ENCODE measurements at regions of chr5 and their contacts with region 1.

Region 1: GRCh38 chr5:134245101-134245604 is 19.3 kb upstream of the PPP2CA start:
- DNase-seq: peak; percentile 72 to 91
- H3K4me3 ChIP-seq: peak overlapping the region; percentile 15; the same call in 1 of the 2 replicates
- H3K27ac ChIP-seq: peak overlapping the region; percentile 94
- H3K4me1 ChIP-seq: peaks cover 57% of the 10 kb centered on the region
- H3K27me3 ChIP-seq: no peaks in the 10 kb centered on the region
- CTCF ChIP-seq: no peak

Region 2: GRCh38 chr5:134063188-134063820 is 181.8 kb before region 1 on chr5:
- CTCF ChIA-PET with region 1: no interaction called
- POLR2A ChIA-PET with region 1: no interaction called
- intact Hi-C with region 1: no loop called
- DNase-seq: no peak
- H3K4me3 ChIP-seq: no peak overlapping the region
- H3K27ac ChIP-seq: no peak overlapping the region
- H3K4me1 ChIP-seq: peaks cover 20% of the 10 kb centered on the region
- H3K27me3 ChIP-seq: no peaks in the 10 kb centered on the region
- CTCF ChIP-seq: no peak

Region 3: DNA sequence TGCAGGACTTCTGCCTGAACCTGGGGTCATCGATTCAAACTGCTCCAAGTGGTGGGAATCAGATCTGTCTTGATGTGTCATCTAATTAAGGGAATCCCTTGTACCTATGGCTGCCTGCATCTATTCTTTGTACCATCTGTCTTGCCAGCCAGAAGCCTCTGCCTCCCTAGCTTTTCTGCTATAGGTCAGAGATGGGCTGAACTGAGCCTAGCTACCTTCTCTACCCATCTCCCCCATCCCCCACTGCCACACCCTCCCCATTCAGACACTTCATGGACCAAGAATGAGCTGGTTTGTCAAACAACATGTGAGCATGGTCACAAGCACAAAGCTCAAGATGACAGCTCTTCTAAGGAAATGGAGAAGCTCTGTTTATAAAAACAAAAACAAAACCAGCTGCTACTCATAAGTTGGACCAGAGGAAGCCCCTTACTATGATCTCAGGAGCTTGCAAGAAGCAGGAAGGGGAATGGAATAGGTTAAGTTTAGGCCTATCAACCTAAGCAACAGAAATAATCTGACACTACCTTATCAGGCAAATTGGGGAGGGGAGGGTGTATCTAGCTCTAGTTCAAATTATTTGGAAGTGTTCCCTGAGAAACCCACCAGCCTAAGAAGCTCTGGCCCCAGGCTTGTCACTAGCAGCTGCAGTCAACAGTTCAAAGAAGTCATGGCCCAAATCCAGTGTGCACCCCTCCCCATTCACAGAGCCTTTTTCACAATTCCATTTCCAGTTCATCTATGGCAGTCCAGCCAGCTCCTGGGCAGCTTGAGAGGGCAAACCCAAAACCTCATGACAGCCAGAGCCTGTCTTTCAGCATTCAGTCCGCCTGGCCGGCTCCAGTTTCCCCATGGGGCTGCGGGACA is 98.3 kb before region 1 on chr5:
- CTCF ChIA-PET with region 1: no interaction called
- POLR2A ChIA-PET with region 1: no interaction called
- intact Hi-C with region 1: no loop called
- DNase-seq: no peak
- H3K4me3 ChIP-seq: no peak overlapping the region
- H3K27ac ChIP-seq: no peak overlapping the region
- H3K4me1 ChIP-seq: peaks cover 17% of the 10 kb centered on the region
- H3K27me3 ChIP-seq: no peaks in the 10 kb centered on the region
- CTCF ChIP-seq: no peak

Region 4: DNA sequence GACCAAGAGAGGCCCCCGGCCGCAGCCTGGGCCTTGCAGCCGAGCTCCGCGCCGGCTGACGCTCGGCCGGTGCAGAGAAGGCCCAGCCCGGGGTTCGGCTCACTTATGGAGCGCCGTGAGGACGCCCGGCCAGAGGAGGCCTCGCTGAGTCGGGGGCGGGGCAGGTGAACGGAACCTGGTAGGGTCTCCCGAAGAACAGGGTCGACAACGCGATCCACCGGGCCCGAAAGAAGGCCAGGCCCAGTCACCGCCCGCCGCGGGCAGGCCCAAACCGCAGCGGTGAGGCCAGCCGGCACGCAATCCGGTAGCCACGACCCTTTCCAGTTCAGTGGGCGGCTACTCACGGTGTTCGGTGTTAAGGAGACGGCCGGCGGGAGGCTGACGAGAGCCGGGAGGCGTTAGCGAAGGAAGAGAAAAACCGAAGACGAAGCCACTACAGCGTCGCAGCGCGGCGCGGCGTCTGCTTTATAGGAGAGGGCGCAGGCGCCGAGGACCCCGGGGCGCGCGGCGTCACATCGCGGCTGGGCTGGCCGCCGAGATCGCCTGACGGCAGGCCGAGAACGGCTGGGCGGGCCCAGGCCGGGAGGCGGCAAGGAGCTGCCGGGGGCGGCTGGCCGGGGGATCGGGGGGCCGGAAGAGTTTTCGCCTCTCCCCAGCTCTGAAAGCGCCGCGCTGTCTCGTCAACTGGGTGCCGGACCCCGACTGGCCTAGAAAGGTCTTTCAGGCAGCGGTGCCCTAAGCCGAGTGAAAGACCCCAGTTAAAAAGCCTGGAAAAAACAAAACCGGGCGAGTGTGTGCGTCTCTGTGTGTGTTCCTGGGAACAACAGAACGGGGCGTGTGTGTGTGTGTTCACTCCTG is 68.4 kb before region 1 on chr5 and contains the start of gene SKP1:
- CTCF ChIA-PET with region 1: no interaction called
- POLR2A ChIA-PET with region 1: no interaction called
- intact Hi-C with region 1: loop called (anchors 5 kb)
- DNase-seq: peak; percentile 59 to 84
- H3K4me3 ChIP-seq: peak within 1 kb of the TSS; percentile 93
- H3K27ac ChIP-seq: peak within 1 kb of the TSS; percentile 93
- H3K4me1 ChIP-seq: peaks cover 23% of the 10 kb centered on the region
- H3K27me3 ChIP-seq: no peaks in the 10 kb centered on the region
- CTCF ChIP-seq: no peak
- total RNA-seq, gene SKP1: 335 and 409 TPM in 2 replicates

Region 5: DNA sequence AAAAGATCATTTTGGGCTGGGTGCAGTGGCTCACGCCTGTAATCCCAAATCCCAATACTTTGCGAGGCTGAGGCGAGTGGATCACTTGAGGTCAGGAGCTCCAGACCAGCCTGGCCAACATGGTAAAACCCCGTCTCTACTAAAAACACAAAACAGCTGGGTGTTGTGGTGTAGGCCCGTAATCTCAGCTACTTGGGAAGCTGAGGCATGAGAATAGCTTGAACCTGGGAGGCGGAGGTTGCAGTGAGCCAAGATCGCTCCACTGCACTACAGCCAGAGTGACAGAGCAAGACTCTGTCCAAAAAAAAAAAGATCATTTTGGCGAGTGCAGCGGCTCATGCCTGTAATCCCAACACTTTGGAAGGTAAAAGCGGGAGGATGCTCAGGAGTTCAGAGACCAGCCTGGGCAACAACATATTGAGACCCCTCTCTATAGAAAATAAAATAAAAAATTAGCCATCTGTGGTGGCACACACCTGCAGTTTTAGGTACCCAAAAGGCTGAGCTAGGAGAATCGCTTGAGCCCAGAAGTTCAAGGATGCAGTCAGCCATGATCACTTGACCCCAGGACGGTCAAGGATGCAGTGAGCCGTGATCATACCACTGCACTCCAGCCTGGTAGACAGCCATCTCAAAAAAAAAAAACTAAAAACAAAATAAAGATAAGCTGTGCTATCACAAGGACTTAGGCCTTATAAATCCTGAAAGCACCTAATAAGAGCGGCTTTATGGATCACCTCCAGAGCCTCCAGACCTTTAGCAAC is 35.5 kb before region 1 on chr5:
- CTCF ChIA-PET with region 1: no interaction called
- POLR2A ChIA-PET with region 1: interaction called, 13 read pairs
- intact Hi-C with region 1: no loop called
- DNase-seq: no peak
- H3K4me3 ChIP-seq: no peak overlapping the region
- H3K27ac ChIP-seq: no peak overlapping the region
- H3K4me1 ChIP-seq: no peaks in the 10 kb centered on the region
- H3K27me3 ChIP-seq: no peaks in the 10 kb centered on the region
- CTCF ChIP-seq: no peak

Region 6: DNA sequence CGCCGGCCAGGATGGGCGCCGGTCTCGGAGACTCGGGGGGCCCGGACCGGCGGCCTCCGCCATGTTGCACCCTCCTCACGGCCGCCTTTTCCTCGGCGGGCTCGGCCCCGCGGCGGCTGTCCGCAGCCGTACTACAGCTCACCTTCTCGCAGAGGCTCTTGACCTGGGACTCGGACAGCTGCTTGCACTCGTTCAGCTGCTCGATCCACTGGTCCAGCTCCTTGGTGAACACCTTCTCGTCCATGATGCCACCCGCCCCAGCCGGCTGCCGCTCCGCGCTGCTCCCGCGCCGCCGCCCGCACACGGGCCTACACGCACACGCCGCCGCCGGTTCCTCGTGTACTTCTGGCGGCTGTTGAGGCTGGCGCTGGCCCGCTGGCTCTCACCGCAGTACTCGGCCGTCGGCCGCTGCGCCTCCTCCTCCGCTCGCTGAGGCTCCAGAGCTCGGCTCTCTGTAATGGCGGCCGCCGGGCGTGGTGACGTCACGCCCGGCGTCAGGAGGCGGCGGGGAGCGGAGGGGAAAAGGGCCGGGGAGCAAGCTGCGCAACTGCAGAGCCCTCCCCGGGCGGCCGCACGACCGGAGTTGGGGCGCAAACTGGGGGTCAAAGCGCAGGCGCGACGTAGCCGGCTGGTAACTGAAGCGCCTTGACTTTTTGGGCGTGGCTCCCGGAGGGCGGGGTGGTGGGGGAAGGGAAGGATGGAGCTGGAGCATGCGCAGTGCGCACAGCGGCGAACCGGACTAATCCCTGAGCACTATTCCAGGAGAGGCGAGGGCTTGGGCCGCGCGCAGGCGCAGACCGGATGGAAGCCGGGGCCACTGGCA is 19.3 kb before region 1 on chr5 and contains the start of gene PPP2CA:
- CTCF ChIA-PET with region 1: no interaction called
- POLR2A ChIA-PET with region 1: interaction called, 5 read pairs
- intact Hi-C with region 1: loop called (anchors 1 kb)
- DNase-seq: peak; percentile 92 to 100
- H3K4me3 ChIP-seq: peak within 1 kb of the TSS; percentile 79
- H3K27ac ChIP-seq: peak within 1 kb of the TSS; percentile 95
- H3K4me1 ChIP-seq: peaks cover 36% of the 10 kb centered on the region
- H3K27me3 ChIP-seq: no peaks in the 10 kb centered on the region
- CTCF ChIP-seq: peak; percentile 38; the same call in 1 of the 2 replicates
- total RNA-seq, gene PPP2CA: 146 and 149 TPM in 2 replicates

Region 7: GRCh38 chr5:134275822-134276221 is 30.7 kb after region 1 on chr5:
- CTCF ChIA-PET with region 1: no interaction called
- POLR2A ChIA-PET with region 1: interaction called, 10 read pairs
- intact Hi-C with region 1: loop called (anchors 1 kb)
- DNase-seq: no peak
- H3K4me3 ChIP-seq: no peak overlapping the region
- H3K27ac ChIP-seq: no peak overlapping the region
- H3K4me1 ChIP-seq: peaks cover 23% of the 10 kb centered on the region
- H3K27me3 ChIP-seq: no peaks in the 10 kb centered on the region
- CTCF ChIP-seq: no peak

Region 8: GRCh38 chr5:134281081-134281480 is 35.9 kb after region 1 on chr5:
- CTCF ChIA-PET with region 1: no interaction called
- POLR2A ChIA-PET with region 1: interaction called, 10 read pairs
- intact Hi-C with region 1: loop called (anchors 1 kb)
- DNase-seq: no peak
- H3K4me3 ChIP-seq: no peak overlapping the region
- H3K27ac ChIP-seq: no peak overlapping the region
- H3K4me1 ChIP-seq: peaks cover 17% of the 10 kb centered on the region
- H3K27me3 ChIP-seq: no peaks in the 10 kb centered on the region
- CTCF ChIP-seq: no peak

Region 9: GRCh38 chr5:134515801-134516200 is 270.6 kb after region 1 on chr5:
- CTCF ChIA-PET with region 1: no interaction called
- POLR2A ChIA-PET with region 1: no interaction called
- intact Hi-C with region 1: no loop called
- DNase-seq: no peak
- H3K4me3 ChIP-seq: no peak overlapping the region
- H3K27ac ChIP-seq: no peak overlapping the region
- H3K4me1 ChIP-seq: peaks cover 26% of the 10 kb centered on the region
- H3K27me3 ChIP-seq: no peaks in the 10 kb centered on the region
- CTCF ChIP-seq: no peak

Measured in PC-9 (cell line).